Activated B cell treated with CpG ODN at 0.5 μM for 24 hours (primary cell): ENCODE measurements at regions of chr14 and their contacts with region 1.

Region 1: GRCh38 chr14:64303471-64303917 is 9.3 kb upstream of the ESR2 start:
- DNase-seq: no peak
- ATAC-seq: peak; percentile 65
- H3K4me3 Mint-ChIP-seq: no peak overlapping the region
- H3K27ac Mint-ChIP-seq: no peak overlapping the region
- H3K4me1 Mint-ChIP-seq: peaks cover 2% of the 10 kb centered on the region
- H3K27me3 Mint-ChIP-seq: no peaks in the 10 kb centered on the region
- CTCF ChIP-seq: peak; percentile 93

Region 2: GRCh38 chr14:63388763-63389431 is 914.6 kb before region 1 on chr14:
- CTCF ChIA-PET with region 1: no interaction called
- POLR2A ChIA-PET with region 1: no interaction called
- intact Hi-C with region 1: loop called (anchors 1 kb)
- DNase-seq: peak; percentile 17
- ATAC-seq: peak; percentile 81
- H3K4me3 Mint-ChIP-seq: no peak overlapping the region
- H3K27ac Mint-ChIP-seq: no peak overlapping the region
- H3K4me1 Mint-ChIP-seq: peaks cover 3% of the 10 kb centered on the region
- H3K27me3 Mint-ChIP-seq: no peaks in the 10 kb centered on the region
- CTCF ChIP-seq: no peak

Region 3: GRCh38 chr14:63800651-63801375 is 502.7 kb before region 1 on chr14:
- CTCF ChIA-PET with region 1: interaction called, 14 read pairs
- POLR2A ChIA-PET with region 1: no interaction called
- intact Hi-C with region 1: loop called (anchors 1 kb)
- DNase-seq: no peak
- ATAC-seq: no peak
- H3K4me3 Mint-ChIP-seq: no peak overlapping the region
- H3K27ac Mint-ChIP-seq: no peak overlapping the region
- H3K4me1 Mint-ChIP-seq: peaks cover 3% of the 10 kb centered on the region
- H3K27me3 Mint-ChIP-seq: no peaks in the 10 kb centered on the region
- CTCF ChIP-seq: no peak

Region 4: GRCh38 chr14:64040044-64040443 is 263.4 kb before region 1 on chr14:
- CTCF ChIA-PET with region 1: interaction called, 6 read pairs
- POLR2A ChIA-PET with region 1: no interaction called
- intact Hi-C with region 1: loop called (anchors 1 kb)
- DNase-seq: no peak
- ATAC-seq: no peak
- H3K4me3 Mint-ChIP-seq: no peak overlapping the region
- H3K27ac Mint-ChIP-seq: no peak overlapping the region
- H3K4me1 Mint-ChIP-seq: no peaks in the 10 kb centered on the region
- H3K27me3 Mint-ChIP-seq: no peaks in the 10 kb centered on the region
- CTCF ChIP-seq: no peak

Region 5: DNA sequence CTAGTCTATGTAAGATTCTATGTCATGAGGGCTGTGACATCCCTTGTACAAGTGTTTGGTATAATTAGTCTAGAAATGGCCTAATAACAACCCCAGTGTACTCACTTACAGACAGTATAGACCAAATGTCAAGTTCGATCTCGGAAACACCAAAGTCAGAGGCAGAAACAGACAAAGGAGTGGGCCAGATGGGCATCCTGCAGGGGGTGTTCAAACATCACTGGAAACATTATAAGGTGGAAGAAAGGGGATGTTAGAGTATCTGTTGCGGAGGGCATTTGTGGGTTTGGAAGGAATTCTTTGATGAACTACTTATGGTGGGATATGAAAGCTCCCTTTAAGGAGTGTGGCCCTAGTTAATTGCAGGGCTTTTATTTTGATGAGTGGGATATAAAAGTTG is 143.9 kb before region 1 on chr14:
- CTCF ChIA-PET with region 1: interaction called, 23 read pairs
- POLR2A ChIA-PET with region 1: no interaction called
- intact Hi-C with region 1: loop called (anchors 2 kb)
- DNase-seq: no peak
- ATAC-seq: peak; percentile 47
- H3K4me3 Mint-ChIP-seq: no peak overlapping the region
- H3K27ac Mint-ChIP-seq: no peak overlapping the region
- H3K4me1 Mint-ChIP-seq: peaks cover 6% of the 10 kb centered on the region
- H3K27me3 Mint-ChIP-seq: no peaks in the 10 kb centered on the region
- CTCF ChIP-seq: no peak